ENCODE measurements at regions of chr19 and their contacts with region 1.

Region 1: GRCh38 chr19:32971715-32972540 is at the starts of genes CEP89 and FAAP24:
- DNase-seq: peak; percentile 100
- H3K4me3 ChIP-seq: peak within 1 kb of the TSS; percentile 61 to 97 (median 88)
- H3K27ac ChIP-seq: peak within 1 kb of the TSS; percentile 77
- H3K4me1 ChIP-seq: peaks cover 10% of the 10 kb centered on the region
- H3K27me3 ChIP-seq: no peaks in the 10 kb centered on the region
- CTCF ChIP-seq: no peak
- POLR2A ChIP-seq: peak; percentile 84
- total RNA-seq, gene CEP89: 46.2 and 46.4 TPM in 2 replicates
- total RNA-seq, gene FAAP24: 4.4 and 5.5 TPM in 2 replicates

Region 2: GRCh38 chr19:33080761-33081681 is 109.1 kb after region 1 on chr19 and contains the start of gene GPATCH1:
- CTCF ChIA-PET with region 1: interaction called, 6 read pairs
- POLR2A ChIA-PET with region 1: interaction called, 4 read pairs
- dilution Hi-C with region 1: no loop called
- intact Hi-C with region 1: loop called (anchors 10 kb)
- DNase-seq: peak; percentile 87
- H3K4me3 ChIP-seq: peak within 1 kb of the TSS; percentile 79 to 89 (median 88)
- H3K27ac ChIP-seq: peak within 1 kb of the TSS; percentile 14
- H3K4me1 ChIP-seq: peaks cover 9% of the 10 kb centered on the region
- H3K27me3 ChIP-seq: no peaks in the 10 kb centered on the region
- CTCF ChIP-seq: no peak
- POLR2A ChIP-seq: peak; percentile 68
- total RNA-seq, gene GPATCH1: 8.1 and 9.2 TPM in 2 replicates

Region 3: DNA sequence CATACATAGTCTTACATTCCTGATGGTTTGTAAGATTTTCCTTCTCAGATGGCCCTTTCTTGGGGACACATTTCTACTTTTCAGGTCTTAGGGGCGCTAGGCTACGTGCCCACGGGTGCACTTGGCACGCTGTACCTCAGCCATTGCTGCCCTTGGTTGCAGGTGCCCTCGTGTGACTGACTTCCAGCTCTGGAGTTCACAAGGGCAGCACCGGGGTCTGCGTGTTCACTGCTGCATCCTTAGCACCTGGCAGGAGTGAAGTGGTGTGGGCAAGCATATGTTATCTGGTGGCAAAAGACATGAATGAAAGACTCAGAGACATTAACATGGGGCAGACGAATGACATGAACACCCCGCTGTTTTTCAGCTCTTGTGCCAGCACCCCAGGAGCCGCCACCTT is 146.7 kb after region 1 on chr19:
- CTCF ChIA-PET with region 1: interaction called, 37 read pairs
- POLR2A ChIA-PET with region 1: no interaction called
- dilution Hi-C with region 1: no loop called
- intact Hi-C with region 1: loop called (anchors 1 kb)
- DNase-seq: no peak
- H3K4me3 ChIP-seq: no peak overlapping the region
- H3K27ac ChIP-seq: no peak overlapping the region
- H3K4me1 ChIP-seq: no peaks in the 10 kb centered on the region
- H3K27me3 ChIP-seq: no peaks in the 10 kb centered on the region
- CTCF ChIP-seq: no peak
- POLR2A ChIP-seq: no peak

Region 4: GRCh38 chr19:33176670-33177416 is 204.9 kb after region 1 on chr19:
- CTCF ChIA-PET with region 1: interaction called, 16 read pairs
- POLR2A ChIA-PET with region 1: no interaction called
- dilution Hi-C with region 1: no loop called
- intact Hi-C with region 1: loop called (anchors 1 kb)
- DNase-seq: peak; percentile 100
- H3K4me3 ChIP-seq: peak overlapping the region; percentile 55 to 86 (median 63)
- H3K27ac ChIP-seq: peak overlapping the region; percentile 62
- H3K4me1 ChIP-seq: peaks cover 15% of the 10 kb centered on the region
- H3K27me3 ChIP-seq: peaks cover 0 to 7% of the 10 kb centered on the region in 2 experiments
- CTCF ChIP-seq: peak in 1 of 2 donors; percentile 32
- POLR2A ChIP-seq: peak; percentile 94

Region 5: GRCh38 chr19:33373701-33374421 is 401.9 kb after region 1 on chr19 and contains the start of gene CEBPG:
- CTCF ChIA-PET with region 1: no interaction called
- POLR2A ChIA-PET with region 1: no interaction called
- dilution Hi-C with region 1: no loop called
- intact Hi-C with region 1: loop called (anchors 5 kb)
- DNase-seq: peak; percentile 54
- H3K4me3 ChIP-seq: peak within 1 kb of the TSS; percentile 81 to 97 (median 94)
- H3K27ac ChIP-seq: peak within 1 kb of the TSS; percentile 96
- H3K4me1 ChIP-seq: peaks cover 46% of the 10 kb centered on the region
- H3K27me3 ChIP-seq: peaks cover 0 to 1% of the 10 kb centered on the region in 2 experiments
- CTCF ChIP-seq: peak; percentile 23 to 26
- POLR2A ChIP-seq: no peak
- total RNA-seq, gene CEBPG: 24.3 and 24.6 TPM in 2 replicates